ENCODE measurements at regions of chr12 and their contacts with region 1.

Region 1: DNA sequence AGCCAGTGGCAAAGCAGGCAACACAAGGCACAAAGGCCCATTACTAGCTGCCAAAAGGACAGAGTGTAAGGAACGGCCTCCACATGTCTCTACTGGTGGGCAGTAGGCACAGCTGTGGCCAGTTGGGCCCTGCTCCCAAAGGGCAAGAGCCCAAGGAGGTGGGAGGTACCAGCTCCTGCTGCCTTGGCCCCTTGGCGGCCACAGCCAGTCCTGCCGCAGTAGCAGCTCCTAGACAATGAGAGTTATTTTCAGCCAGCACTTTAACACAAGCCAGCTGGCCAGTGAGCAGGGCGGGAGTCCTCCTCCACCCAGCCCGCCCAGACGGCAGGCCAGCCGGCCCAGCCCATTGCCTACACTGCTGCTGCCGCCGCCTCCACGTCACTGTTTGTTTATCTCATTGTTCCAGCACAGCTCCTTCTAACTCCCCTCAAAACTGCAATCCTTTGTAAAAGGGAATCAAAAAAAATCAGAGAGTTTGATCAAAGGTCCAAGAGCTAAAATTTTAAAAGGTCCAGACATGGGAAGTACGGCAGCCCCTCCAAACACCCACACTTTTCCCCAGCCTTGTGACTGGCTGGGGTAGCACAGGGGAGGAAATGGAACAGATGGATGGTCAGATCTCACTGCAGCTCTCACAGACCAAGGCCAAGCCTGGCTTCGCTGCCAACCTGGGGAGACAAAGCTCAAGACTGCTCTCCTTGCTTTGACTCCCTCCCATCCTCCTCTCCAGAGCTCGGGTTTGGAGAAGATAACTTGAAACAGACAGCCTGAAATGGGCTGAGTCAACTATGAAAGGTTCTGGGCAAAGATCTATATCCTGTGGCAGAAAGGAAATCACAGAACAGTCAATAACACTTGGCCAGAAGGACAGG is 33.5 kb downstream of the FMNL3 start:
- DNase-seq: peak; percentile 84 to 90 (median 88)
- ATAC-seq: peak; percentile 99
- H3K4me3 ChIP-seq: no peak overlapping the region
- H3K27ac ChIP-seq: peak overlapping the region; percentile 61
- H3K4me1 ChIP-seq: peaks cover 20 to 40% of the 10 kb centered on the region in 2 experiments
- H3K27me3 ChIP-seq: no peaks in the 10 kb centered on the region
- CTCF ChIP-seq: peak; percentile 28 to 46 (median 35); a peak in 3 of 6 replicates
- EP300 ChIP-seq: peak; percentile 32; the same call in 1 of the 2 replicates
- POLR2A ChIP-seq: peak; percentile 55; the same call in 1 of the 2 replicates
- RAD21 ChIP-seq: no peak

Region 2: GRCh38 chr12:49662998-49663843 is 10.5 kb before region 1 on chr12:
- CTCF ChIA-PET with region 1: no interaction called
- POLR2A ChIA-PET with region 1: interaction called, 16 read pairs
- in situ Hi-C with region 1: no loop called
- intact Hi-C with region 1: no loop called
- DNase-seq: peak; percentile 51 to 89 (median 72)
- ATAC-seq: peak; percentile 97
- H3K4me3 ChIP-seq: no peak overlapping the region
- H3K27ac ChIP-seq: peak overlapping the region; percentile 95
- H3K4me1 ChIP-seq: peaks cover 13 to 26% of the 10 kb centered on the region in 2 experiments; a peak in 4 of 5 replicates
- H3K27me3 ChIP-seq: no peaks in the 10 kb centered on the region
- CTCF ChIP-seq: no peak
- EP300 ChIP-seq: peak; percentile 73
- POLR2A ChIP-seq: peak; percentile 48
- RAD21 ChIP-seq: no peak; a peak in 1 of 4 replicates

Region 3: GRCh38 chr12:49687941-49688340 is 14.3 kb after region 1 on chr12:
- CTCF ChIA-PET with region 1: no interaction called
- POLR2A ChIA-PET with region 1: interaction called, 14 read pairs
- in situ Hi-C with region 1: no loop called
- intact Hi-C with region 1: no loop called
- DNase-seq: no peak
- ATAC-seq: peak; percentile 80
- H3K4me3 ChIP-seq: no peak overlapping the region
- H3K27ac ChIP-seq: no peak overlapping the region
- H3K4me1 ChIP-seq: peaks cover 0 to 7% of the 10 kb centered on the region in 2 experiments; a peak in 2 of 5 replicates
- H3K27me3 ChIP-seq: no peaks in the 10 kb centered on the region
- CTCF ChIP-seq: peak; percentile 11 to 85 (median 28); a peak in 4 of 6 replicates
- EP300 ChIP-seq: no peak
- POLR2A ChIP-seq: no peak
- RAD21 ChIP-seq: no peak